Breast epithelium (tissue), 4 donors: ENCODE measurements at regions of chr20 and their contacts with region 1.

Region 1: DNA sequence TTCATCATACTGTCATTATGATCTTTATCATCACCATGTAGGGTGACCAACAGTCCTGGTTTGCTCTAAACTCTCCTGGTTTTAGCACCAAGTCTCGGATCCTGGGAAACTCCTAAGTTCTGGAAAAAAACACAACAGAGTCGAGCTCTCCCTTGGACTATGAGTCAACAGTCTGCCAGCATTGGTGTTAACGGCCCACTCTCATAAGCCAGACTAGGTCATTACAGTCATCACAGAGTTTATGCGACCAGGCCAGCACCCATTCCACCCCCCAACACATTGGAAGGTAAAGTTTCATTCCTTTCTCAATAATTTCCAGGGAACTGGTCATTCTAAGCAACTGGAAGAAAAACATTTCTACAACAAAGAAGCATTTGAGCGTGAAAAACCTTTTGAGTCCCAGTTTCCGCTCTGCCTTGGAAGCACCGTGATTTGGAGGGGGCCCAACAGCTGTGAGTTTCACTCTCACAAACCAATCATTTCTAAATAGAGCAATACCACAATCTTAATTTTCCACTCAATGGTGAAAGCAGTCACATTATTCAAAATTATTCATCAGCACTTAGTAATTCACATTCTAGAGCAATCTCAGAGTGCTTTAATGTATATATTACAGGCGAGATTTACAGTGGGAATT is 445.0 kb downstream of the CDH26 start:
- DNase-seq: no peak
- H3K4me3 ChIP-seq: no peak overlapping the region
- H3K27ac ChIP-seq: no peak overlapping the region
- H3K4me1 ChIP-seq: no peaks in the 10 kb centered on the region
- H3K27me3 ChIP-seq: no peaks in the 10 kb centered on the region
- CTCF ChIP-seq: no peak
- POLR2A ChIP-seq: no peak

Region 2: DNA sequence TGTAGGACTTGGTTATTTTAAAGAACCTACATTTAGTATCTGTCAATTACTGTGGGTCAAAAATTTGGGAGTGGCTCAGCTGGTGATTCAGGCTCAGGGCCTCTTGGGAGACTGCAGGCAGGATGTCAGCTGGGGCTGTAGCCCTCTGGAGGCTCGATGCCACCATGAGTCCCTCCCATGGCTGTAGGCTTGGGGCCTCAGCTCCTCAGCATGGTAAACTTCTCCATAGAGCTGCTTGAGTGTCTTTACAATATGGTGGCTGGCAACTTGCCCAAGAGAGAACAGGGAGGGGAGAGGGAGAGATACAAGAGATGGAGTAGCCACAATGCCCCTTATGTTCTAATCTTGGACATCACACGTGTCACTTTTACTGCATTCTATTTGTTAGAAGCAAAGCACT is 25.4 kb after region 1 on chr20:
- intact Hi-C with region 1: loop called (anchors 1 kb)
- DNase-seq: no peak
- H3K4me3 ChIP-seq: no peak overlapping the region
- H3K27ac ChIP-seq: no peak overlapping the region
- H3K4me1 ChIP-seq: no peaks in the 10 kb centered on the region
- H3K27me3 ChIP-seq: no peaks in the 10 kb centered on the region
- CTCF ChIP-seq: no peak
- POLR2A ChIP-seq: no peak

Region 3: GRCh38 chr20:60453388-60454246 is 50.4 kb after region 1 on chr20:
- intact Hi-C with region 1: no loop called
- DNase-seq: no peak
- H3K4me3 ChIP-seq: no peak overlapping the region
- H3K27ac ChIP-seq: no peak overlapping the region
- H3K4me1 ChIP-seq: no peaks in the 10 kb centered on the region
- H3K27me3 ChIP-seq: no peaks in the 10 kb centered on the region
- CTCF ChIP-seq: no peak
- POLR2A ChIP-seq: no peak